Sigmoid colon (tissue), 7 donors: ENCODE measurements at regions of chr3 and their contacts with region 1.

Region 1: DNA sequence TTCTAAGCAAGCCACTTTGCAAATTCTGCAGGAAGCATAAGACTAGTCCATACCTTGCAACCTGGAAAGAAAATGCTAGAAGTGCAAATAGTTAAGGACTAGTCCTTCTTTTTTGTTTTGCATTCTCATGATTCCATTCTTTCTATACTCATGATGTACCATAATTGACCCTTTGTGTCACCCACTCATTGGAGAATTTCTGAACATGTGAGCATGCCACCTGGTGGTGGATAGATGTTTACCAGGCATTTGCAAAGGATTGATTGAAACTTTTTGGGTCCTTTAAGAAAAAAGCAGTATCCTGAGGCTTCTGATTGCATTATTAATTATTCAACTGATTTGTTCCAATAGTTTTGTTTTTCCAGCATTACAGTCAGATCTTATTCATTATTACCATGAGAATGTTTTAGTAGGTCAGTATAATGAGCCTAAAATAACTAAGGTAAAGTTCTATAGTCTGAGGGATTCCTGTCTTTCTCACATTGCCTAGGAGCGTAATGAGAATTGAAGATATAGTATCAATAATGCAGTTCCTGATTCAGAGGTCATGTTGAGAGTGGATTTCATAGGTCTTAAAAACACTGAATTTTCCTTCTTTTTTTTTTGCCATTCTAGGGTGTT is 20.2 kb upstream of the DIPK2A start:
- DNase-seq: no peak
- H3K4me3 ChIP-seq: no peak overlapping the region
- H3K27ac ChIP-seq: no peak overlapping the region
- H3K4me1 ChIP-seq: no peaks in the 10 kb centered on the region
- H3K27me3 ChIP-seq: no peaks in the 10 kb centered on the region
- CTCF ChIP-seq: peak; percentile 19 to 59 (median 53)
- EP300 ChIP-seq: no peak
- POLR2A ChIP-seq: no peak

Region 2: DNA sequence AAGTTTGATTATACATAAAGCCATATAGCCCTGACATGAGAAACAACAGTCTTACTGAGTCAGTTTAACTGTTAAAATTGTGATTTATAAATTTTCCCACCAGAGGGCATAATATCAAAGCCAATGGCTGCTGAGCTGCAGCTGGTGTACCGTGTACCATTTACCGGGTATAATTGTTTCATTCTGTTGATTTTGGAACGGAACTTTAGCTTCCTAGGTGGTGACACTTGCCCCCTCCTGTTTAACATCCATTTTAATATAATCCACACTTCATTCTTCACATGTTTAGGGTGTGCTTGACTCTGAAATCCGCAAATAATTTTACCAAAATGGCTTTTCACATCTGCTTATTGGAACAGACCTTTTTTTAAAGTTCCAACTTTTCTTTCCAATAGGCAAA is 176.0 kb before region 1 on chr3:
- intact Hi-C with region 1: loop called (anchors 5 kb)
- DNase-seq: no peak
- H3K4me3 ChIP-seq: peak overlapping the region in 2 of 4 donors; percentile 22 to 23
- H3K27ac ChIP-seq: no peak overlapping the region
- H3K4me1 ChIP-seq: peaks cover 0 to 12% (median 8%) of the 10 kb centered on the region in 4 donors
- H3K27me3 ChIP-seq: no peaks in the 10 kb centered on the region
- CTCF ChIP-seq: peak in 3 of 4 experiments; percentile 32 to 56 (median 32)
- EP300 ChIP-seq: no peak
- POLR2A ChIP-seq: no peak

Region 3: GRCh38 chr3:144241404-144241803 is 289.9 kb after region 1 on chr3:
- intact Hi-C with region 1: no loop called
- DNase-seq: no peak
- H3K4me3 ChIP-seq: no peak overlapping the region
- H3K27ac ChIP-seq: peak overlapping the region in 2 of 4 donors; percentile 45 to 52
- H3K4me1 ChIP-seq: peaks cover 0 to 28% (median 26%) of the 10 kb centered on the region in 4 donors
- H3K27me3 ChIP-seq: no peaks in the 10 kb centered on the region
- CTCF ChIP-seq: no peak
- EP300 ChIP-seq: no peak
- POLR2A ChIP-seq: no peak